GM12878 (cell line): ENCODE measurements at regions of chr2 and their contacts with region 1.

Region 1: GRCh38 chr2:99559075-99559662 is 69.4 kb upstream of the REV1 start:
- DNase-seq: no peak
- ATAC-seq: peak; percentile 99
- H3K4me3 ChIP-seq: no peak overlapping the region
- H3K27ac ChIP-seq: no peak overlapping the region
- H3K4me1 ChIP-seq: no peaks in the 10 kb centered on the region
- H3K27me3 ChIP-seq: no peaks in the 10 kb centered on the region; a peak in 2 of 4 replicates
- CTCF ChIP-seq: peak; percentile 93 to 97 (median 96)
- EP300 ChIP-seq: no peak
- POLR2A ChIP-seq: no peak
- RAD21 ChIP-seq: peak; percentile 96

Region 2: DNA sequence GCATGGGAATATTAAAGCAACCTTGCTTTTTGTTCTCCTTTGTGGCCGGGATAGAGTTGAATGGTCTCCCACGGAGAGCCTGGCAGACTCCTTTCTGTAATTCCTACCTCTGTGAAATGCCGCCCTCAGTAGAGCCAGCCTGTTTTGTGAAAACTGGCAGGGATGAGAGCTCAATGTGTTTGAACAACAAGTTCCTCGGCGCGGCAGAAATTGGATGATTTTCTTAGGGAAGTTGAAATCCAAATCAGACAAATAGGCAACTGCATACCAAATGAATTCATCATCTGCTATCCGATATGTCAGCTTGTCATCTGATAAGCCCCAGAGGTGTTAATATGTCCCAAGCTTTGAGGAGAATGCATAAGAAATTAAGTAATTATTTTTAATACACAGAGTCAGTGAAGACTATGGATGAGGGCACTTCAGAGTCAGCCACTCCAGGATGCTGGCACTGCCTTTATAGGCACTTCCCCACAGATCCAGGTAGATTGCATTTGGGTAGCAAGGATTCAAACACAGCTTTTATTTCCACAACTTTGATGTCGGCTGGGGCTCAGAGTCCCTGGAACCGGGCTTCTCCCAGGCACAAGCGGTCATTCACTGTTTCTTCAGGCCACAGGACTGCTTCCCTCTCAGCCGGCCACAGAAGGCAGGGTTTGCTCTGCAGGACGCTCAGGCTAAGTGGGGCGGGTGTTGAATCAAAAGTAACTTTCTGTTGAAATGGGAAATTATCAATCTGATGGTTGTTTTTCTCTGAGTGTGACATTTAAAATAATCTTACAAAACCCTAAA is 13.4 kb after region 1 on chr2:
- CTCF ChIA-PET with region 1: interaction called, 15 read pairs
- POLR2A ChIA-PET with region 1: no interaction called
- RAD21 ChIA-PET with region 1: interaction called, 8 read pairs
- SMC1A ChIA-PET with region 1: no interaction called
- in situ Hi-C with region 1: no loop called
- intact Hi-C with region 1: no loop called
- DNase-seq: no peak
- ATAC-seq: no peak
- H3K4me3 ChIP-seq: no peak overlapping the region
- H3K27ac ChIP-seq: no peak overlapping the region
- H3K4me1 ChIP-seq: no peaks in the 10 kb centered on the region
- H3K27me3 ChIP-seq: no peaks in the 10 kb centered on the region; a peak in 2 of 4 replicates
- CTCF ChIP-seq: no peak
- EP300 ChIP-seq: no peak
- POLR2A ChIP-seq: no peak
- RAD21 ChIP-seq: no peak

Region 3: GRCh38 chr2:99692785-99693184 is 133.6 kb after region 1 on chr2:
- CTCF ChIA-PET with region 1: no interaction called
- POLR2A ChIA-PET with region 1: no interaction called
- RAD21 ChIA-PET with region 1: no interaction called
- SMC1A ChIA-PET with region 1: no interaction called
- in situ Hi-C with region 1: no loop called
- intact Hi-C with region 1: loop called (anchors 5 kb)
- DNase-seq: no peak
- ATAC-seq: no peak
- H3K4me3 ChIP-seq: no peak overlapping the region
- H3K27ac ChIP-seq: no peak overlapping the region
- H3K4me1 ChIP-seq: no peaks in the 10 kb centered on the region
- H3K27me3 ChIP-seq: no peaks in the 10 kb centered on the region; a peak in 1 of 4 replicates
- CTCF ChIP-seq: no peak; a peak in 1 of 6 replicates
- EP300 ChIP-seq: no peak
- POLR2A ChIP-seq: no peak
- RAD21 ChIP-seq: no peak

Region 4: DNA sequence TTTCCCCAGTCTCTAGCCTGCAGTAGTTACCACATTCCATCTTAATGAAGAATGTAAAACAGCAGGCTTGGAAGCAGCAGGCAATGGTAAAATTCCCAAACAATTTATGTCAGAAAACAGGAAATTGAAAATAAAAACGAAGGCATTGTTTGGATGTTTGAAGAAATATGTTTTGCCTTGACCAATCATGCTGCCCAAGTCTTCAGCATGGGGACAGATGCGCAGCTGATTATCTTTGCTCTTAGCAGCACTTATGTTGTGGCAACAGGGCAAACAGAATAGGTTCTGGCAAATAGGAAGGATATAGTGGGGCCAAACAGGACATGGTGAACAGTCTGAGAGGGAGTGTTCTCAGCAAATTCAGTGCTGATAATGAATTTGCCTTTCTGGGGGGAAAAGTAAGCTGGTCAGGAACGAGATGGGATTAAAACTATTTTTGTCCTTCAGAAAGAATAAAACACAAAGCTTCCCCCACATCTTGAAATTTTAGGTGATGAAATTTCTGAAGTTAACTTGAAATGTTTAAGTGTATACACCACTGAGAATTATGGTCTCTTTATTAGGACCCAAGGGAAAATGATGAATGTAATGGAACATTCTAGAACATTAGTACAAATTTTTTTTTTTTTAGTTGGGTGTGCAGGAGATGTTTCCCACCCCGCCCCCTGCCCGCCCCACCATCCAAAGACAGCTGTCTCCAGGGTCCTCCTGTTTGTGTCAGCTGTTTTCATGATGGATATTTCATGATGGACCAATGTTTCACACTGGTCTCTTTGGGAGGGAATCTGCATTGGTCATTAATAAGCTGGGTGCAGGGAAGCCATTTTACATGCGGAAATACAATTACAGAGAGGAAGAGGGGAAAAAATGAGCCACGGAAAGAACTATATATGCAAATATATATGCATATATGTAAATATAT is 170.2 kb after region 1 on chr2:
- CTCF ChIA-PET with region 1: no interaction called
- POLR2A ChIA-PET with region 1: no interaction called
- RAD21 ChIA-PET with region 1: no interaction called
- SMC1A ChIA-PET with region 1: no interaction called
- in situ Hi-C with region 1: no loop called
- intact Hi-C with region 1: no loop called
- DNase-seq: no peak
- ATAC-seq: no peak
- H3K4me3 ChIP-seq: no peak overlapping the region
- H3K27ac ChIP-seq: no peak overlapping the region
- H3K4me1 ChIP-seq: no peaks in the 10 kb centered on the region
- H3K27me3 ChIP-seq: no peaks in the 10 kb centered on the region
- CTCF ChIP-seq: no peak
- EP300 ChIP-seq: no peak
- POLR2A ChIP-seq: no peak
- RAD21 ChIP-seq: no peak

Region 5: DNA sequence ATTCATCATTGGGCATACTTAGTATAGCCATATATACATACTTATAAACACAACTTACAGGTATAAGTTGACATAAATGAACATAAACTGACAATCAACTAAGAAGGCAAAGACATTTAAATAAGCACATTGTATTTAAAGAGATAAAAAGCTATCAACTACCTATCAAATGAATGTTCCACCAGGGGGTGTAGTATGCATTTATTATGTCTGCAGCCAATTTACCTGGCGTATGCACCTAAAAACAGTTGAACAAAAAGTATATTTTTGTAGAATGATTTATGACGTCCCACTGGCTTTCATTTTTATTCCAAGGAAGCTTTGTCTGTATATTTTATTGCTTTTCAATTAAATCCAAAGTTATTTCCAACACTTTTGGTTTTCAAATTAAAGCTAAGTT is 259.7 kb after region 1 on chr2:
- CTCF ChIA-PET with region 1: interaction called, 3 read pairs
- POLR2A ChIA-PET with region 1: no interaction called
- RAD21 ChIA-PET with region 1: no interaction called
- SMC1A ChIA-PET with region 1: no interaction called
- in situ Hi-C with region 1: no loop called
- intact Hi-C with region 1: loop called (anchors 2 kb)
- DNase-seq: no peak
- ATAC-seq: no peak
- H3K4me3 ChIP-seq: no peak overlapping the region
- H3K27ac ChIP-seq: no peak overlapping the region
- H3K4me1 ChIP-seq: no peaks in the 10 kb centered on the region
- H3K27me3 ChIP-seq: no peaks in the 10 kb centered on the region
- CTCF ChIP-seq: no peak; a peak in 1 of 6 replicates
- EP300 ChIP-seq: no peak
- POLR2A ChIP-seq: no peak
- RAD21 ChIP-seq: peak; percentile 39

Region 6: GRCh38 chr2:100242891-100243619 is 683.9 kb after region 1 on chr2:
- CTCF ChIA-PET with region 1: interaction called, 19 read pairs
- POLR2A ChIA-PET with region 1: no interaction called
- RAD21 ChIA-PET with region 1: interaction called, 6 read pairs
- SMC1A ChIA-PET with region 1: interaction called, 4 read pairs
- in situ Hi-C with region 1: loop called (anchors 5 kb)
- intact Hi-C with region 1: loop called (anchors 1 kb)
- DNase-seq: no peak
- ATAC-seq: peak; percentile 82
- H3K4me3 ChIP-seq: no peak overlapping the region
- H3K27ac ChIP-seq: no peak overlapping the region
- H3K4me1 ChIP-seq: peaks cover 18% of the 10 kb centered on the region
- H3K27me3 ChIP-seq: 0 out of 4 replicates have a peak, but pooled peaks cover 2 to 5% of the 10 kb centered on the region in 2 experiments
- CTCF ChIP-seq: peak; percentile 77 to 81 (median 77)
- EP300 ChIP-seq: no peak
- POLR2A ChIP-seq: no peak
- RAD21 ChIP-seq: peak; percentile 91

Region 7: GRCh38 chr2:100381240-100381639 is 822.1 kb after region 1 on chr2:
- CTCF ChIA-PET with region 1: interaction called, 11 read pairs
- POLR2A ChIA-PET with region 1: no interaction called
- RAD21 ChIA-PET with region 1: interaction called, 4 read pairs
- SMC1A ChIA-PET with region 1: interaction called, 4 read pairs
- in situ Hi-C with region 1: loop called (anchors 10 kb)
- intact Hi-C with region 1: loop called (anchors 5 kb)
- DNase-seq: peak; percentile 60
- ATAC-seq: peak; percentile 97
- H3K4me3 ChIP-seq: no peak overlapping the region
- H3K27ac ChIP-seq: no peak overlapping the region
- H3K4me1 ChIP-seq: no peaks in the 10 kb centered on the region; the same call in 1 of the 2 replicates
- H3K27me3 ChIP-seq: no peaks in the 10 kb centered on the region; a peak in 1 of 4 replicates
- CTCF ChIP-seq: peak; percentile 85 to 90 (median 89)
- EP300 ChIP-seq: no peak
- POLR2A ChIP-seq: no peak
- RAD21 ChIP-seq: peak; percentile 85